Activated CD4-positive, alpha-beta memory T cell treated with anti-CD3 and anti-CD28 coated beads for 36 hours (primary cell): ENCODE measurements at regions of chr12 and their contacts with region 1.

Region 1: DNA sequence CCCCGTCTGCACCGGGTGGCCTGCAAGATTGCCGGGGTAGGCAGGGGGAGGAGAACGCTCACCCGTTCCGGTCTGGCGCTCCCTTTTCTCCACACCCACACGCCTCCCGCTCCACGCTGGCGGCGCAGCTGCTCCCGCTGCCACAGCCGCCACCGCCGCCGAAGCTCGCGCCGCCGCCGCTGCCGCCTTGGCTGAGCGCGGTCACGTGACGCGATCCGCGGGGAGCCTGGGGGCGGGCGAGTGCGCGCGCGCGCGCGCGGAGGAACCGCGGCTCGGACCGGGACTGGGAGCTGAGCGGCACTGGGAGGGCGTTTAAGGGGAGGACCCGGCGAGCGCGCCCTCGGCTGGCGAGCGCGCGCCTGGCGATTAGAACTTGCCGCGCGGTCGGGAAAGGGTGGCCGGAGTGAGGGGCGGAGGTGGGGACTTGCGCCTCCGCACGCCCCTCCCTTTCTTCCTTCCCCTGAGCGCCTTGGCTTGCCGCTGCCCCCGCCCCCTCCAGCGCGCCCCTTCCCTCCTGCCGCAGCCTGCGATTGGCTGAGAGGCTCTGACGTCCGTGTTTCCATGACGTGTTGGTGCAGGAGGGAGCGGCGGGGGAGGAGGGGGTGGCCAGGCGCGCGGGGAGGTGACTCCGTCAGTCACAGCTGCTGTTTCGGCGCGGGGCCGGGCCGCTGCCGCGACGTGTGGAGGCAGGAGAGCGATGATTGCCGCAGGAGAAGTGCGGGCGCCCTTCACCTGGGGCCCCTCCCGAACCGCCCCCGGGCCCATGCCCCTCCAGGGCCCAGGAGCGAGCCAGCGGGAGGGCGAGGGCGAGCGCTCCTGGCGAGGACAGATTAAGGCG is 738 bp upstream of the ATP2B1 start:
- DNase-seq: peak; percentile 99
- H3K4me3 Mint-ChIP-seq: peak overlapping the region; percentile 81
- H3K27ac Mint-ChIP-seq: peak overlapping the region; percentile 83
- H3K4me1 Mint-ChIP-seq: peaks cover 33% of the 10 kb centered on the region
- H3K27me3 Mint-ChIP-seq: no peaks in the 10 kb centered on the region

Region 2: GRCh38 chr12:89494411-89495231 is 214.8 kb before region 1 on chr12:
- CTCF ChIA-PET with region 1: interaction called, 3 read pairs
- POLR2A ChIA-PET with region 1: interaction called, 3 read pairs
- intact Hi-C with region 1: loop called (anchors 1 kb)
- DNase-seq: peak; percentile 71
- H3K4me3 Mint-ChIP-seq: peak overlapping the region; percentile 36
- H3K27ac Mint-ChIP-seq: peak overlapping the region; percentile 99
- H3K4me1 Mint-ChIP-seq: peaks cover 30% of the 10 kb centered on the region
- H3K27me3 Mint-ChIP-seq: no peaks in the 10 kb centered on the region

Region 3: GRCh38 chr12:89542912-89543592 is 166.3 kb before region 1 on chr12:
- CTCF ChIA-PET with region 1: interaction called, 10 read pairs
- POLR2A ChIA-PET with region 1: no interaction called
- intact Hi-C with region 1: loop called (anchors 2 kb)
- DNase-seq: peak; percentile 75
- H3K4me3 Mint-ChIP-seq: no peak overlapping the region
- H3K27ac Mint-ChIP-seq: no peak overlapping the region
- H3K4me1 Mint-ChIP-seq: peaks cover 4% of the 10 kb centered on the region
- H3K27me3 Mint-ChIP-seq: no peaks in the 10 kb centered on the region

Region 4: DNA sequence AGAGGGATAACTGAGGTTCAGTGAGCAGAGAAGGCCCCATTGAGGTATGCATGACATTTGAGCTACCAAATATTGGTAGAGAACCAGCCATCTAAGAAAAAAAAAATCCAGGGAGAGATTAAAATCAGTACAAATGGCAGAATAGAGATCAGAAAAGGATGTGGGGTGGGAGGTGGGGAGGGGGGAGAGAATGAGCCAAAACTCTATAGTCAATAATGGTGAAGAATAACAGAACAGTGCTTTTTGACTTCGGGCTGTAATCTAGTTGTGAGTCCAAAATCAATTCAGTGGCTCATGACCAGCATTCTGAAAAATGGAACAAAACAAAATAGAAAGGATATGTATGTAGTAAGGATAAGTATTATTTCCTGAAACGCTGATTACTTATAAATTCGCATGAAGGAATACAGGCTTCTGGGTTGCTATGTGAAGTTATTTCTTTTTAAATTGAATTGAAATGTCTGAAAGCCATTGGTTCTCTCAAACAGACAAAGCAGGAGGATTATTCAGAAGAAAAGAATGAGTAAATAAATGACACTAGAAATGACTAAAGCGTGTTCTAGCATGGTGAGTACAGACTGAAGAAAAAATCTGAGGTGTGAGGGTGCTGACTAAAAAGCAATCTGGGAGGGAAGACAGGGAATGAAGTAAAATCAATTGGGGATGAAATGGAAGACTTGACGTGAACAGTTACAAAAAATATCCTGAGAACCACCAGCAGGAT is 73.2 kb before region 1 on chr12:
- CTCF ChIA-PET with region 1: no interaction called
- POLR2A ChIA-PET with region 1: interaction called, 3 read pairs
- intact Hi-C with region 1: loop called (anchors 2 kb)
- DNase-seq: peak; percentile 45
- H3K4me3 Mint-ChIP-seq: no peak overlapping the region
- H3K27ac Mint-ChIP-seq: peak overlapping the region; percentile 35
- H3K4me1 Mint-ChIP-seq: peaks cover 15% of the 10 kb centered on the region
- H3K27me3 Mint-ChIP-seq: no peaks in the 10 kb centered on the region

Region 5: GRCh38 chr12:89882050-89882449 is 172.7 kb after region 1 on chr12:
- CTCF ChIA-PET with region 1: no interaction called
- POLR2A ChIA-PET with region 1: no interaction called
- intact Hi-C with region 1: loop called (anchors 1 kb)
- DNase-seq: peak; percentile 65
- H3K4me3 Mint-ChIP-seq: no peak overlapping the region
- H3K27ac Mint-ChIP-seq: peak overlapping the region; percentile 70
- H3K4me1 Mint-ChIP-seq: peaks cover 40% of the 10 kb centered on the region
- H3K27me3 Mint-ChIP-seq: no peaks in the 10 kb centered on the region

Region 6: GRCh38 chr12:89960011-89960507 is 250.7 kb after region 1 on chr12:
- CTCF ChIA-PET with region 1: no interaction called
- POLR2A ChIA-PET with region 1: interaction called, 4 read pairs
- intact Hi-C with region 1: loop called (anchors 5 kb)
- DNase-seq: peak; percentile 57
- H3K4me3 Mint-ChIP-seq: no peak overlapping the region
- H3K27ac Mint-ChIP-seq: no peak overlapping the region
- H3K4me1 Mint-ChIP-seq: peaks cover 14% of the 10 kb centered on the region
- H3K27me3 Mint-ChIP-seq: no peaks in the 10 kb centered on the region